PC-3 (cell line): ENCODE measurements at regions of chr3 and their contacts with region 1.

Region 1: GRCh38 chr3:20039766-20040475 is at the start of gene KAT2B:
- DNase-seq: peak; percentile 74
- ATAC-seq: peak; percentile 63
- H3K4me3 ChIP-seq: peak within 1 kb of the TSS; percentile 83
- H3K27ac ChIP-seq: no peak within 1 kb of the TSS
- H3K4me1 ChIP-seq: peaks cover 19% of the 10 kb centered on the region; the same call in 1 of the 2 replicates
- H3K27me3 ChIP-seq: no peaks in the 10 kb centered on the region
- CTCF ChIP-seq: peak; percentile 68
- total RNA-seq, gene KAT2B: 10.9 and 11.9 TPM in 2 replicates

Region 2: GRCh38 chr3:19792388-19792787 is 247.5 kb before region 1 on chr3:
- CTCF ChIA-PET with region 1: no interaction called
- POLR2A ChIA-PET with region 1: no interaction called
- intact Hi-C with region 1: no loop called
- DNase-seq: no peak
- ATAC-seq: no peak
- H3K4me3 ChIP-seq: no peak overlapping the region
- H3K27ac ChIP-seq: no peak overlapping the region
- H3K4me1 ChIP-seq: no peaks in the 10 kb centered on the region
- H3K27me3 ChIP-seq: no peaks in the 10 kb centered on the region
- CTCF ChIP-seq: no peak

Region 3: DNA sequence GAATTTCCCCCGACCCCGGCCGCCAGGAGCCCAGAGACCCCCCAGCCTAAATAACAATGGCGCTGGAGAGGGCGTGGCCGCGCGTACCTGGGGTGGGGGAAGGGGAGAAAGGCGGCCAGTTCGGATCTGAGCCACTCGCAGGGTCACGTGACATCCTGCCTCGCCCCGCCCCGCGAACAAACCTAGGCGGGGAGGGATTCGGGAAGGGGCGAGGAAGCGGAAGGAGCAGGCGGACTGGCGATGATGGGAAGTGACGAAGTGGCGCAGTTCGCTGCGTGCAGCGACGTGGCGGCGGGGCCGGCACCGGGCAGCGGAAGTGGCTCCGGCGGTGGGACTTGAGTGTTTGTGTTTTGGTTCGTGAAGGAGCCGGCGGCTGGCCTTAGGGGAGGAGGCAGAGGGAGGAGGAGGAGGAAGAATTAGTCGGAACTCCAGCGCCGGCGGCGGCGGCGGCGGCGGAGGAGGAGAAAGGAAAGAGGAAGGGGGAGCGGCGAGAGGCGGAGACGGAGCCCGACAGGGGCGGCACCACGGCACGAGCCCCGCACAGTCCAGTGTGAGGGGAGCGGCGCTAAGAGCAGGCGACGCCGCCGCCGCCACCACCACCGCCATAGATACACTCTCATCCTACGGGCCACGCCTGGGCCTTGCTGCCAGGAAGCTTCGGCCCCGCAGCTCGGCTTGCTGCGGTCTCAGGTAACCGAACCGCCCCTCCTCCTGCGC is 92.9 kb before region 1 on chr3 and contains the start of gene RAB5A:
- CTCF ChIA-PET with region 1: no interaction called
- POLR2A ChIA-PET with region 1: no interaction called
- intact Hi-C with region 1: loop called (anchors 1 kb)
- DNase-seq: peak; percentile 99
- ATAC-seq: peak; percentile 88
- H3K4me3 ChIP-seq: peak within 1 kb of the TSS; percentile 87
- H3K27ac ChIP-seq: peak within 1 kb of the TSS; percentile 87
- H3K4me1 ChIP-seq: peaks cover 38% of the 10 kb centered on the region
- H3K27me3 ChIP-seq: no peaks in the 10 kb centered on the region
- CTCF ChIP-seq: no peak
- total RNA-seq, gene RAB5A: 61.3 and 86.8 TPM in 2 replicates

Region 4: GRCh38 chr3:20023623-20024405 is 16.1 kb before region 1 on chr3:
- CTCF ChIA-PET with region 1: interaction called, 11 read pairs
- POLR2A ChIA-PET with region 1: interaction called, 5 read pairs
- intact Hi-C with region 1: no loop called
- DNase-seq: no peak
- ATAC-seq: peak; percentile 44
- H3K4me3 ChIP-seq: no peak overlapping the region
- H3K27ac ChIP-seq: no peak overlapping the region
- H3K4me1 ChIP-seq: peaks cover 11% of the 10 kb centered on the region
- H3K27me3 ChIP-seq: no peaks in the 10 kb centered on the region
- CTCF ChIP-seq: no peak

Region 5: DNA sequence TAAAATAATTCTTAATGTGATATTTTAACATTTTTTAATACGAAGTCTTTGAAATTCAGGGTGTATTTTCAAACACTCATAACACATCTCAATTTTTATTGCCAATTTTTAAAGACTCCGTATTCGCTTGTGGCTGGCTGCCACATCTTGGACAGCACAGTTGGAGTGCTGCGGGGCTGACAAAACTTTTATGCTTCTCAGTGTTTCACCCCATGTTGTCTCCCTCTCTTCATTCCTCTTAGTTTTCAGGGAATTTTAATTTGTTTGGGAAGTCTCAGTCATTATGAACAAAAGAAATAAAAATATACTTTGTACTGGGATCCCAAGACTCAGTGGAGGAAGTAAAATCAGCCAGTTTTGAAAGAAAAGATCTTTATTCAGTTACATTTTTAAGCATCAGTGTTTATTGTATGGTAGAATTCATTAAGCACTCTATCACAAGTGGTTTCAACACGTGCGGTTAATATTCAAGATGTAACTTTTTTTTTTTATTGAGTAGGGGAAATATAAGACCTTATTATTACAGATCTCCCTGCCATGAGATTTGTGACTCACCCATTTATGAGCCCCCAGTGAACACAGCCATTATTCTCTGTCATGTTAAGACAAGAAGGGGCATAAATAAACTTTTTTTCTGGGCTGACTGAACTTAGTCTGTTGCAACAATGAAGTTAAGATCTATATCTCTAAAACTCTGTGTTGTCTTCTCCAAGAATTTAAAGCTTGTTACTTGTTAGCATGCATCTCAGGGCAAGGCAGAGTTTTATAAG is 27.1 kb after region 1 on chr3:
- CTCF ChIA-PET with region 1: interaction called, 3 read pairs
- POLR2A ChIA-PET with region 1: no interaction called
- intact Hi-C with region 1: loop called (anchors 1 kb)
- DNase-seq: peak; percentile 54
- ATAC-seq: peak; percentile 71
- H3K4me3 ChIP-seq: no peak overlapping the region
- H3K27ac ChIP-seq: 0 out of 2 replicates have a peak overlapping the region, but pooled peaks have one; percentile 1
- H3K4me1 ChIP-seq: peaks cover 21% of the 10 kb centered on the region
- H3K27me3 ChIP-seq: no peaks in the 10 kb centered on the region
- CTCF ChIP-seq: no peak

Region 6: GRCh38 chr3:20185701-20186598 is 146.0 kb after region 1 on chr3 and contains the start of gene SGO1:
- CTCF ChIA-PET with region 1: interaction called, 3 read pairs
- POLR2A ChIA-PET with region 1: interaction called, 4 read pairs
- intact Hi-C with region 1: loop called (anchors 1 kb)
- DNase-seq: peak; percentile 99
- ATAC-seq: peak; percentile 92
- H3K4me3 ChIP-seq: peak within 1 kb of the TSS; percentile 89
- H3K27ac ChIP-seq: peak within 1 kb of the TSS; percentile 66
- H3K4me1 ChIP-seq: peaks cover 16% of the 10 kb centered on the region
- H3K27me3 ChIP-seq: no peaks in the 10 kb centered on the region
- CTCF ChIP-seq: 0 out of 2 replicates have a peak, but pooled peaks have one; percentile 13
- total RNA-seq, gene SGO1: 12.6 and 13.6 TPM in 2 replicates